GM10248 (cell line): ENCODE measurements at regions of chr17 and their contacts with region 1.

Region 1: GRCh38 chr17:61026818-61027217 is 349.2 kb downstream of the BCAS3 start:
- DNase-seq: no peak
- CTCF ChIP-seq: no peak

Region 2: GRCh38 chr17:60941028-60941427 is 85.8 kb before region 1 on chr17:
- CTCF ChIA-PET with region 1: no interaction called
- POLR2A ChIA-PET with region 1: no interaction called
- DNase-seq: no peak
- CTCF ChIP-seq: no peak

Region 3: DNA sequence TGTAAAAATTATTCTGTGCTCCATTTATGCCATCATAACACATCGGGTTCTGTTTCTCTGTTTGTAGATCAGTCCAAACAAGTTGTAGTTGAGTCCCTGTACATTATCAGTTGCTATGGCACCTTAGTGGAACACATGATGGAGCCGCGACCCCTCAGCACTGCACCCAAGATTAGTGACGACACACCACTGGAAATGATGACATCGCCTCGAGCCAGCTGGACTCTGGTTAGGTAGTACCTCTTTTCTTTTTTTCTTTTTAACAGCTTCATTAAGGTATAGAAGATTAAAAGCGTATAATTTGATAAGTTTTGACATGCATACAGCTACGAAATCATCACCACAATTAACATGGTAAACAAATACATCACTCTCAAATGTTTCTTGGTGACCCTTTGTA is 11.0 kb after region 1 on chr17:
- CTCF ChIA-PET with region 1: interaction called, 10 read pairs
- POLR2A ChIA-PET with region 1: no interaction called
- DNase-seq: no peak
- CTCF ChIP-seq: no peak